Activated T-helper 1 cell treated with anti-CD3 and anti-CD28 coated beads, Interleukin-12 subunit alpha, Interleukin-12 subunit beta, Interleukin-2, Interleukin-4 antibody, amounts not matched to agents 30 ng/mL and 10 ng/mL and 1 ng/mL, durations not matched to agents 14 hours and 24 hours and 36 hours (primary cell): ENCODE measurements at regions of chr12 and their contacts with region 1.

Region 1: GRCh38 chr12:56117778-56118687 is at the start of gene ZC3H10:
- DNase-seq: peak; percentile 98
- H3K4me3 Mint-ChIP-seq: peak within 1 kb of the TSS; percentile 91
- H3K27ac Mint-ChIP-seq: peak within 1 kb of the TSS; percentile 99
- H3K4me1 Mint-ChIP-seq: peaks cover 31% of the 10 kb centered on the region
- H3K27me3 Mint-ChIP-seq: no peaks in the 10 kb centered on the region
- total RNA-seq, gene ZC3H10: 13.5 and 13.7 TPM in 2 replicates

Region 2: DNA sequence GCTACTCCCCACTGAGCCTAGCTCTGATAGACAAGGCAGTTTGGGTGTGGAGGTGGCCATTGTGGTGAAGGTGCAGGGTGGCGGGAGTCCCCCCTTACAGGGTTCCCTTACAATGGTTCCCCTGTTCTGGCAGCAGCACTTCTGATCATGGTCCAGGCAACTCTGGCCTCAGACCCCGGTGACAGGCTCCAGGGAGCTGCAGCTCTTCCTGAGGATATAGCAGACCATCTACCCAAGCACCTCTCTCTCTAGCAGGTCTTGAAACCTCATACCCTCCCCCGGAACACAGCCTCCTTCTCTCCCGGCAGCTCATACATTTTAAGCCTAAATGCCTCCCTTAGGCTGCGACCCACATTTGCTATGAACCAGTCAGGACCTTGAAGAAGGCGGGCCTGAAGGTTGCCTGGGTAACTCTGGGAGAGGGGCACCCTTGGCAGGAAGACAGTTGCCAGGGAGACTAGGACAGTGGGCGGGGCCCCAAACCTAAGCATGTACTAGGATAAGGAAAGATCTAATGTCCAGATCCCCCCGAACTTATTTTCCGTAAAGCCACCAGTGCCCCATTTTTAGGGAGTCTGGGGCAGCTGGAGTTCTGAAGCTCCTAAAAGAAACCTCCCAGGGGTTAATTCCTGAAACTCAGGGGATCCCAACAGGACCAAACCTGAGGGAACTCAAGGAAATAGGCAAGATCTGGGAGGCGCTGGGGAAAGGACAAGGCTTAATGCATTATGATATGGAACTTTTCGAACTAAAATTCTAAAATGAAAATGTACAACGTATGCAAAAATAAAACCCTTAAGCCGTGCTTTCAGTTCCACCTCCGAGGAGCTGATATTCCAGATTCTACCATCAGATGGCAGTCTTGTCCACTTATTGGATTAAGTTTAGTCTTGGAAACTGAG is 379.7 kb before region 1 on chr12:
- intact Hi-C with region 1: loop called (anchors 2 kb)
- DNase-seq: peak; percentile 73
- H3K4me3 Mint-ChIP-seq: peak overlapping the region; percentile 79
- H3K27ac Mint-ChIP-seq: peak overlapping the region; percentile 73
- H3K4me1 Mint-ChIP-seq: peaks cover 44% of the 10 kb centered on the region
- H3K27me3 Mint-ChIP-seq: peaks cover 3% of the 10 kb centered on the region

Region 3: DNA sequence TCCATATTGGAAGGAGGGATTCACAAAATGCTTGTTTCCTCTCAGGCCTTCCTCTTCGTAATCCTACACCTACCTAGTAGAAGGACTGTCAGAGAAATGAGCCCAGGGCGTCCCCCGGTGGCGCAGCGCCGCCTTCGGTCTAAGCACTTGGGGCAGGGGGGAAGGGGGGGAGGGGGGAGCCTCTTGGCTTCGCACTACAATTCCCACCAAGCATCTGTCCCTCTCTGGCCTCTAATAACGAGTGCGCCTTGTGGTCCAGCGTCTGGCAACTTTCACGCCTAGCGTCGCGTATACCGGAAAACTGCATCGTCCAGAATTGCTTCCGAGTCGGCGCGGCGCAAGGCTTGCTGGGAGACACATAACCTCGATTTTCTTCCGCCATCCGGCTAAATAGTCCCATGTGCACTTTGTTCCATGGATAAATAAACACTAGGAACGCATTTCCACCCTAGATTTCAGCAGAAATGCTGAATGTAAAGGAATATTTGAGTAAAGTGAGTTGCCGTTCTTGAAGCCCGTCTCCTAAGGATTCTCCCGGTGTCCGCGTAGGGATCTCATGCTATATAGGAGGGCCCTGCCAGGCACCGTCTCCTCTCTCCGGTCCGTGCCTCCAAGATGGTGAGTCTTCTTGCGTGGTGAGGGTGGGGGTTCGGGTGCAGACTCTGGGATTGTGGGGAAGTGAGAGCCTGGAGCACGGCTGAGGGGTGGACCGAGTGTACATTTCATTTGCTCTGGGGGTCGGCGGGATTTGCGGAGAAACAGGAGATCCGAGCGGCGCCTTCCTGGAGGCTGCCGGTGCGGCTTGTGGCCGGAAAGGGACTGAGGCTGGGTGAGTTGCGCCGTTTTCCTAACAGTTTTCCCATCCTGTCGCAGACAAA is 76.2 kb before region 1 on chr12 and contains the start of gene RPS26:
- intact Hi-C with region 1: loop called (anchors 1 kb)
- DNase-seq: peak; percentile 90
- H3K4me3 Mint-ChIP-seq: peak within 1 kb of the TSS; percentile 97
- H3K27ac Mint-ChIP-seq: peak within 1 kb of the TSS; percentile 97
- H3K4me1 Mint-ChIP-seq: peaks cover 49% of the 10 kb centered on the region
- H3K27me3 Mint-ChIP-seq: no peaks in the 10 kb centered on the region
- total RNA-seq, gene RPS26: 35.4 and 38.2 TPM in 2 replicates

Region 4: DNA sequence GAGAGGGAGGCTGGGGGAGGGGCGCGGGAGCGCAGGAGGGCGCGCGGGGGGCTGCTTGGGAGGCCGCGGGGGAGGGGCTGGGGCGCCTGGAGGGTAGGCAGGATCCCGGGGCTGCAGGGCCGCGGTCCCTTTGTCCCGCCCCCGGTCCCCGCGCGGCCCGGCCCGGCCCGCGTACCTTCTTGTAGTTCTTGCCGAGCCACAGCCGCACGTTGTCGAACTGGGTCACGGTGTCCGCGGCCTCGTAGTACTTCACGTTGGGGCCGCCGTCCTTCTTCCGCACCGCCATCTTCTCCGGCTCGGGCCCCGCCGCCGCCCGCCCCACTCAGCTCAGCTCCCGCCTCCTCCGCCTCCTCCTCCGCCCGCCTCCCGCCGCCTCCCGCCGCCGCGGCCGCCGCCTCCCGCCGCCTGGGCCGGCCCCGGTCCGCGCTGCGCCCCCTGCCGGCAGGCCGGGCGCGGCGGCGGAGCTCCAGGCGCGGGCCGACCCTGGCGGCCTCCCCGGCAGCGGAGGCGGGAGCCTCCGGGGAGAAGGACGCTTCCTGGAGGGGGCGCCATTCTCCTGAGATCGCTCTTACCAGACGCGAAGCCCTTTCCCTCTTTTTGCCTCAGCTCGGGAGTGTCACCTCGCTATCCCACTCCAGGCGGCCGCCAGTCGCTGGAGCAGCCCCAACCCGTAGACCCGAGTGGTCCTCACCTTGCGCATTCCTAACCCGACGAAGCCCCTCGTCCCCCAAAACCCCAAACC is 71.3 kb after region 1 on chr12 and contains the start of gene SMARCC2:
- intact Hi-C with region 1: loop called (anchors 1 kb)
- DNase-seq: peak; percentile 85
- H3K4me3 Mint-ChIP-seq: peak within 1 kb of the TSS; percentile 95
- H3K27ac Mint-ChIP-seq: peak within 1 kb of the TSS; percentile 96
- H3K4me1 Mint-ChIP-seq: peaks cover 55% of the 10 kb centered on the region
- H3K27me3 Mint-ChIP-seq: peaks cover 2% of the 10 kb centered on the region
- total RNA-seq, gene SMARCC2: 124 and 132 TPM in 2 replicates

Region 5: DNA sequence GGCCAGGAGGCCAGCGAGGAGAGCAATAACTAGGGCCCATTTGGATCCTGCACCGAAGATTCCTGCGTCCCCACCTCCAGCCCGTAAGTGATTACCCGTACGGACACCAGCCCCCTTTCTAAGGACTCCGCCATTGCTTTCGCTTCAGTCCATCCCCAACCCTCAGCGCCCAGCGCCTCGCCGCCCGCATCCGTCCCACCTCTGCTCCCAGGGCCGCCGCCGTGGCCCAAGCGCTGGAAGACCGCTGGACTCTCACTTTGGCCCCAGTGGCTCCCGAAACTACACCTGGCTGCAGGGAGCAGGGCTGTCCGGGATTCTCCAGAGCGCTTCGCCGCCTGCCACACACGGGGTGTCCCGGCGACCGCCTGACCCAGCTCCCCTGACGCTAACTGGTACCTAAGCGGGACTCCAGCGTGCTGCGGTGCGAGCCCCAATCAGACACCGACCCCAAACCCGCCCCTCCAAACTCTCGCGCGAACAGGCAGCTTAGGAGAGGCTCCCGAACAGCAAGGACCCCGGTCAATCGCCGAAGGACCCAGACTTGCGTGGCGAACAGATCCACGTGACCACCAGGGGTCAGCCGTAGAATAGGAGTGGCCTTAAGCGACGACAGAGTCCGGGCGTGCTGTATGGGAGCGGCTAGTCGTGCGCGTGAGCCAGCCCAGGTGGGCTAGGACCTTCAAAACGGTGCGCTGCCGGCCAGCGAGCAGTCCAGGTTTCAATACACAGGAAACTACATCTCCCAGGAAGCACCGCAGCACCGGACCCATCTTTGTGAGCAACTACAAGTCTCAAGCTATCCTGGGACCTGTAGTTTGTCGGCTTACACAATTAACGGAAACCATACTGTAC is 197.8 kb after region 1 on chr12 and contains the start of gene CNPY2:
- intact Hi-C with region 1: loop called (anchors 1 kb)
- DNase-seq: peak; percentile 83
- H3K4me3 Mint-ChIP-seq: peak within 1 kb of the TSS; percentile 98
- H3K27ac Mint-ChIP-seq: peak within 1 kb of the TSS; percentile 96
- H3K4me1 Mint-ChIP-seq: peaks cover 12% of the 10 kb centered on the region
- H3K27me3 Mint-ChIP-seq: no peaks in the 10 kb centered on the region
- total RNA-seq, gene CNPY2: 170 and 172 TPM in 2 replicates

Region 6: GRCh38 chr12:56645717-56646446 is 527.8 kb after region 1 on chr12 and contains the start of gene ATP5F1B:
- intact Hi-C with region 1: loop called (anchors 5 kb)
- DNase-seq: peak; percentile 91
- H3K4me3 Mint-ChIP-seq: peak within 1 kb of the TSS; percentile 96
- H3K27ac Mint-ChIP-seq: peak within 1 kb of the TSS; percentile 95
- H3K4me1 Mint-ChIP-seq: peaks cover 37% of the 10 kb centered on the region
- H3K27me3 Mint-ChIP-seq: no peaks in the 10 kb centered on the region
- total RNA-seq, gene ATP5F1B: 714 and 716 TPM in 2 replicates